AG04449 (cell line): ENCODE measurements at regions of chr1 and their contacts with region 1.

Region 1: DNA sequence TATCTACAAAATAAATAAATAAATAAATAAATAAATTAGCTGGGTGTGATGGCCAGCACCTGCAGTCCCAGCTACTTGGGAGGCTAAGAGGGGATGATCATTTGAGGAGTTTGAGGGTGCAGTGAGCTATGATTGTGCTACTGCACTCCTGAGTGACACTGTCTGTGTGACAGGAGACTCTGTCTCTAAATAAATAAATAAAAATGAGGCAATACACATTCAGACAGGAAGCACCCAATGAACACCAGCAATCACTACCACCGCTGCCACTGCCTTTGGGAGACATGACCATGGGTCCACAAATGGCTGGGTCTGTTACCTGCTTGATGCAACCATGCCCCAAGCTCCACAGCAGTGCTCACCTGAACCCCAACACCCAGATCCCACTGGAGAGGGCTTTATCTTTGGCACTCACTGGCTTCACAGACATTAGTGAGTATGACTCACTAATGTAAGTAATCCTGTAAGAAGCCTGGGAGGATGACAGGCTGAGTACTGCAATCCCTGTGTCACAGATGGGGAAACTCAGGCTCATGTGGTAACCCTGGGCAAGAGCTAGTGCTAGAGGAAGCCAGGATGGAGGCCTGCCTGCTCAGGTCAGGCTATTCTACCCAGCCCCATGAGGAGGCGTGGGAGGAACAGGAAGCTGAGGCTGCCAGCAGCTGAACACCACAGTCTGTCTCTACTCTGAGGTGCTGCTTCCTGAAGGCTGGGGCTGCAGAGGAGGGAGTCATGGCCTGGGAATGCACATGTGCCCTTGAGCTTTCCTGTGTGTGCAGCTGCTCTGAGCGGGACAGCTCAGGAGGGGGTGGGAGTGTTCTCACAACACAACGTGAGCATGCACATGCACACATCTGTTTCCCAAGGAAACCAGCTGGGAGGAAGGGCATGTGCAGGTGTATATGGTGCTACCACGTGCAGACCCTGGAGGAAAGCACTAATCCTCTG is 43.0 kb downstream of the SLC9A1 start:
- DNase-seq: peak; percentile 98
- H3K4me3 ChIP-seq: no peak overlapping the region
- CTCF ChIP-seq: peak; percentile 72

Region 2: GRCh38 chr1:27154991-27155781 is 43.3 kb after region 1 on chr1 and contains the start of gene SLC9A1:
- CTCF ChIA-PET with region 1: interaction called, 6 read pairs
- POLR2A ChIA-PET with region 1: interaction called, 39 read pairs
- DNase-seq: peak; percentile 56
- H3K4me3 ChIP-seq: peak within 1 kb of the TSS; percentile 66
- CTCF ChIP-seq: peak; percentile 89